Colonic mucosa (tissue), 4 donors: ENCODE measurements at regions of chr10 and their contacts with region 1.

Region 1: GRCh38 chr10:31320550-31321211 is 1.7 kb downstream of the ZEB1 start:
- DNase-seq: peak; percentile 29
- H3K4me3 ChIP-seq: peak overlapping the region; percentile 48
- H3K27ac ChIP-seq: peak overlapping the region; percentile 83
- H3K4me1 ChIP-seq: no peaks in the 10 kb centered on the region
- H3K27me3 ChIP-seq: peaks cover 10% of the 10 kb centered on the region
- CTCF ChIP-seq: no peak

Region 2: DNA sequence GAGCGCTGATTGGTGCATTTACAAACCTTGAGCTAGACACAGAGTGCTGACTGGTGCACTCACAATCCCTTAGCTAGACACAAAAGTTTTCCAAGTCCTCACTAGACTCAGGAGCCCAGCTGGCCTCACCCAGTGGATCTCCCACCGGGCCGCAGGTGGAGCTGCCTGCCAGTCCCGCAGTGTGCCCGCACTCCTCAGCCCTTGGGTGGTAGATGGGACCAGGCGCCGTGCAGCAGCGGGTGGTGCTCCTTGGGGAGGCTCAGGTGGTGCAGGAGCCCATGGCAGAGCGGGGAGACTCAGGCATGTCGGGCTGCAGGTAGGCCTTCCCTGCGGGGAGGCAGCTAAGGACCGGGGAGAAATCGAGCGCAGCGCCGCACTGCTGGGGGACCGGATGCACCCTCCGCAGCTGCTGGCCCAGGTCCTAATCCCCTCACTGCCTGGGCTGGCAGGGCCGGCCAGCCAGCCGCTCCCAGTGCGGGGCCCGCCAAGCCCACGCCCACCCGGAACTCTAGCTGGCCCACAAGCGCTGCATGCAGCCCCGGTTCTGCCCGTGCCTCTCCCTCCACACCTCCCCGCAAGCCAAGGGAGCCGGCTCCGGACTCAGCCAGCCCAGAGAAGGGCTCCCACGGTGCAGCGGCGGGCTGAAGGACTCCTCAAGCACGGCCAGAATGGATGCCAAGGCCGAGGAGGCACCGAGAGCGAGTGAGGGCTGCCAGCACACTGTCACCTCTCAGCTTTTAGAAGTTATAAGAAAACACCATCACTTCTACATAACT is 417.9 kb before region 1 on chr10:
- intact Hi-C with region 1: no loop called
- DNase-seq: no peak
- H3K4me3 ChIP-seq: no peak overlapping the region
- H3K27ac ChIP-seq: no peak overlapping the region
- H3K4me1 ChIP-seq: no peaks in the 10 kb centered on the region
- H3K27me3 ChIP-seq: no peaks in the 10 kb centered on the region
- CTCF ChIP-seq: no peak

Region 3: GRCh38 chr10:31808258-31809218 is 487.9 kb after region 1 on chr10:
- intact Hi-C with region 1: loop called (anchors 5 kb)
- DNase-seq: no peak
- H3K4me3 ChIP-seq: no peak overlapping the region
- H3K27ac ChIP-seq: peak overlapping the region; percentile 26
- H3K4me1 ChIP-seq: no peaks in the 10 kb centered on the region
- H3K27me3 ChIP-seq: no peaks in the 10 kb centered on the region
- CTCF ChIP-seq: peak; percentile 69